Mucosa of descending colon (tissue), 3 donors: ENCODE measurements at regions of chr22 and their contacts with region 1.

Region 1: DNA sequence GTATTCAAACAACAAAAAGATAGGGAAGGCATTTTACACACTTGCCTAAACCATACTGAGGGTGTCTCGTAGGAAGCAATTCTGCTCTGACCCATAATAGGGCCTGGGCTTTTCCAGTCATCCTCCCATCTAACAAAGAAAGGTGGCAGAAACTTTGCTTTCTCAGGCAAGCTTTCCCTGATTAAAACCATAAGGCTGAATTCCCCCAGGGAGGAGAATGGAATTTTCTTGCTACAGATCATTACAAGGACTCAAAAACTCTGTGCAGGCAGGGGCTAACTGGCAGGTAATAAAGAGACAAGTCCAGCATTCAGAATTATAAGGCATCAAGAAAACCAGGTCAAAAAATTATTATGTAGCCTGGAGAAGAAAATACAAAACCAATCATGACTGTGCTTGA is 90.4 kb downstream of the RBFOX2 start:
- DNase-seq: no peak
- ATAC-seq: no peak
- H3K4me3 ChIP-seq: no peak overlapping the region
- H3K4me1 ChIP-seq: no peaks in the 10 kb centered on the region
- CTCF ChIP-seq: no peak

Region 2: GRCh38 chr22:35437038-35437437 is 501.2 kb before region 1 on chr22:
- intact Hi-C with region 1: no loop called
- DNase-seq: no peak
- ATAC-seq: peak; percentile 39
- H3K4me3 ChIP-seq: no peak overlapping the region
- H3K4me1 ChIP-seq: no peaks in the 10 kb centered on the region
- CTCF ChIP-seq: no peak

Region 3: GRCh38 chr22:35840302-35840739 is 97.9 kb before region 1 on chr22:
- intact Hi-C with region 1: no loop called
- DNase-seq: peak; percentile 86 to 87 (median 87)
- ATAC-seq: peak; percentile 90
- H3K4me3 ChIP-seq: peak overlapping the region; percentile 18
- H3K4me1 ChIP-seq: peaks cover 12% of the 10 kb centered on the region
- CTCF ChIP-seq: no peak

Region 4: DNA sequence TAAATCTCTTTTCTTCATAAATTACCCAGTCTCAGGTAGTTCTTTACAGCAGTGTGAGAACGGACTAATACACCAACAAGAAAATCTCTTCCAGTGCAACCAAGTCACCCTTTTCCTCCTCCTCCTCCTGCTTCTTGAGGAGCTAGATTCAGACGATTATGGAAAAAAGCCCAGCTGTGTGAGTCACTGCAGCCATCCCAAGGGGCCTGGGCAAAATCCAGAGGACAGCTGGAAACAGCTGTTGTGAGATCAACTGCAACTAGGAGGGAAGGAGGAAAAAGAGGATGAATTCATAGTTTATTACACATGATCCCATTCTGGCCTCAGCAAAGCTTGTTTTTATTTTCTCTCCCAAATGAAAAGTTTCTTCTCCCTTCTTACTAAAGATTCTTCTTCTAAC is 57.5 kb after region 1 on chr22:
- intact Hi-C with region 1: no loop called
- DNase-seq: peak in 2 of 3 donors; percentile 39 to 71
- ATAC-seq: peak; percentile 55
- H3K4me3 ChIP-seq: no peak overlapping the region
- H3K4me1 ChIP-seq: no peaks in the 10 kb centered on the region
- CTCF ChIP-seq: no peak

Region 5: DNA sequence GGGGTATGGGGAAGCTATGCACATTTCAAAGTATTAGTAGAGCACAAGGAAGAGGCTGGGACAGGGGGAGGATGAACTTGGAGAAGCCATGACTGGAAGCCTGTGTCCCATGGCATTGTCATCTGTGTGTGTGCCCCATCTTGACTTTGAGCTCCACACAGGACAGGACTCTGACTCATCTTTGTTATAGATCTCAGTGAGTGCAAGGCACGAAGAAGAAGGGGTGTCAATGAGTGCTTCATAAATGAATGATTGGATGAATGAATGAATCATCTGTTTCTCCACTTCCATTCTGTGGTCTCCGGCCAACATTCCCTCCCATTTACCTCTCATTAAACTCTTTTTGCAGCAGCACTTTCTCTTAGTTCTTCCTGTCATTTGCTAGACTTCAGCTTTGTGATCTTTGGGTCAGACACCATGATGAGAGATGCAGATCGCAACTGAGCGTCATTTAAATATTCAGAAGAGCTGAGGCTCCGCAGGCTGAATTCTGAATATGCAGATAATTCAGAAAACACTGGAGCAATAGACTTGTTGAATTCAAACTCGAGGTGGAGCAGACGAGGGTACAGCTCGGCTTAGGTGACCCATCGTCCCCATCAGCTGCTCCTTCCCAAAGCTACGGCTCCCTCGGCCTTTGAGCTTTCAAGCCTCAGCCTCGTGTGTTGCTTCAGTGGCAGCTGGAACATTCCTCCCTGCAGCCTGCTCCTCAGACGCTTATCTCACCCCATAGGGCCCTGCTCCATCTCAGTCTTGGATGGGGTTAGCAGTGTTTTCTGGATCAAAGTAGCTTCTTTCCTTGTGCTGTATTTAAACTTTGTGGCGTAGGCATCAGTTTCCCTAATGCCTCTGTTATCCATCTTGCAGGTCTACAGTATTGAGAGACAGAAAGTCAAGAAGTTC is 191.5 kb after region 1 on chr22:
- intact Hi-C with region 1: loop called in 1 of 2 experiments (anchors 5 kb)
- DNase-seq: no peak
- ATAC-seq: no peak
- H3K4me3 ChIP-seq: no peak overlapping the region
- H3K4me1 ChIP-seq: no peaks in the 10 kb centered on the region
- CTCF ChIP-seq: no peak